ENCODE measurements at regions of chr2 and their contacts with region 1.

Region 1: GRCh38 chr2:177217247-177217843 is 4.8 kb downstream of the HNRNPA3 start:
- DNase-seq: no peak
- H3K4me3 ChIP-seq: no peak overlapping the region
- H3K27ac ChIP-seq: no peak overlapping the region
- H3K4me1 ChIP-seq: peaks cover 24 to 73% (median 25%) of the 10 kb centered on the region in 3 donors
- H3K27me3 ChIP-seq: no peaks in the 10 kb centered on the region
- CTCF ChIP-seq: no peak
- POLR2A ChIP-seq: no peak

Region 2: GRCh38 chr2:177254433-177255226 is 37.3 kb after region 1 on chr2:
- intact Hi-C with region 1: loop called (anchors 5 kb)
- DNase-seq: no peak
- H3K4me3 ChIP-seq: peak overlapping the region in 2 of 4 donors; percentile 23 to 33
- H3K27ac ChIP-seq: peak overlapping the region; percentile 70 to 99 (median 84)
- H3K4me1 ChIP-seq: peaks cover 50 to 100% (median 81%) of the 10 kb centered on the region in 3 donors
- H3K27me3 ChIP-seq: no peaks in the 10 kb centered on the region
- CTCF ChIP-seq: peak in 5 of 6 experiments; percentile 23 to 63 (median 37)
- POLR2A ChIP-seq: no peak

Region 3: DNA sequence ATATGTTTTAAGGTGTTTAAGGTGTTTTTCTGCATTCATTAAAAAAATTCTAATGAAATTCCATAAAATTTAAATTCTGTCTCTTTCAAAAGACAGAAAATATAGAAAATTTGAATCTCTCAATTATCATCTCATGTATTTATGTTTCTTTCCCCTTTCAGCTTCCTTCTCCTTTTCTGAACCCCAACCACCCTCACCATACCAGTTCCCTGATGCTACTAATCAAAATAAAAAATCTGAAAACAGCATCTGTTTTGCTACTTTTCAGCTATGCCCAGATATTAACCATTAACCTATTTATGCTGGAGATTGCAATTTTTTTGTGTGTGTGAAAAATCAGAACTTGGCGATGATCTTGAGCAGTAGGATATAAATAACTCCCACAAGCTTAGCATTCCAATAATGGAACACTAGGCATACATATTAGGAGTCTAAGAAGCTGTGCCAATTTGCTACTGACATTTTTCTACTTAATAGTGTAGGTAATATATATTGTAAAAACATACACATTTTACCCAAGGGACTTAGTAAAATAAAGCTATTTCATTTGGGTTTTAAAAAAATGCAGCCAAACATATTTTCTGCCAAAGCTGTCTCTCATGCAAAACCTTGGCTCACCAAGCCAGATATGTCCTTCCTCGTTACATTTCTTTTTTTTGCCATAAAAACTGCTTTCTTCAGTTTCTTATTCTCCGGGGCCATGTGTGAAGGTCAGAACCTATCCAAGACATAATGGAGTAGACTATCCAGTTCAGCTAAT is 142.7 kb after region 1 on chr2:
- intact Hi-C with region 1: no loop called
- DNase-seq: no peak
- H3K4me3 ChIP-seq: no peak overlapping the region
- H3K27ac ChIP-seq: no peak overlapping the region
- H3K4me1 ChIP-seq: no peaks in the 10 kb centered on the region
- H3K27me3 ChIP-seq: no peaks in the 10 kb centered on the region
- CTCF ChIP-seq: no peak
- POLR2A ChIP-seq: no peak